ENCODE measurements at regions of chr17 and their contacts with region 1.

Region 1: GRCh38 chr17:50547035-50547735 is at the start of gene SPATA20:
- DNase-seq: peak; percentile 96
- H3K4me3 ChIP-seq: peak within 1 kb of the TSS; percentile 35 to 75 (median 50)
- H3K27ac ChIP-seq: peak within 1 kb of the TSS; percentile 49 to 89 (median 85)
- H3K4me1 ChIP-seq: peaks cover 16 to 37% (median 27%) of the 10 kb centered on the region in 6 donors
- H3K27me3 ChIP-seq: peaks cover 0 to 11% (median 0%) of the 10 kb centered on the region in 7 donors
- CTCF ChIP-seq: peak in 10 of 11 experiments; percentile 90 to 98 (median 98)
- POLR2A ChIP-seq: peak in 2 of 3 donors; percentile 22 to 45
- total RNA-seq, gene SPATA20: 32.8 to 128 (median 57.5) TPM

Region 2: DNA sequence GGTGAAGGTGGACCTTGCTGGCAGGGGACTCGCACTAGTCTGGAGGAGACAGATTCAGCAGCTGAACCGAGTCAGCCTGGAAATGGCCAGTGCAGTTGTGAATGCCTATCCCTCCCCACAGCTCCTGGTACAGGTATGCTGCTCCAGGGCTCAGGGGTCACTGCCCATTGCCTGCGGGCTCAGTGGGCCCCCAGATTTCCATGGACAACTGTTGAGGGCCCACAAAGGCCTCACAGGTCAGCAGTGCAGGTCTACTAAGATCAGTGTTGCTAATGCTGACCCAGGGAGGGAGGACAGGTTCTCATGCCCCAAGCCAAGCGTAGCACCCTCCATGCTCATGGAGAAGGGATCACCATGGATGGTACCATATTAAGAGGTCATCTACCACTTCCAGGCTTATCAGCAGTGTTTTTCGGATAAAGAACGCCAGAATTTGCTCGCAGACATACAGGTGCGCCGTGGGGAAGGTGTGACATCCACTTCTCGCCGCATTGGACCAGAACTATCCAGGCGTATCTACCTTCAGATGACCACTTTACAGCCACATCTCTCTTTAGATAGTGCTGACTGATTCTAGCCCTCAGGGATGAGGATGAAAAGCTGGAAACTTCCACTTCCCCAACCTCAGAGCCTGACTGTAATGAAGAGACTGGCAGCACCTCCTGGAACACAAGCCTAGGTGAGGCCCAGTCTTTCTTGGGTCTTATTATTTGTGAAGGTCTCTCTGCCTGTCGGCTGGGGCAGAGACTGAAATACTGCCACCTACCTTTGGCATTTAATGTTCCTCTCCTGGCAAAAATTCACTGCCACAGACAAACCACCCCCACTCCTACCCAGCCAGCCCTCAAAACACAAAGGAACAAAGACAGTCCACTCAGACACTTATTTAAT is 166.6 kb before region 1 on chr17:
- intact Hi-C with region 1: no loop called
- DNase-seq: peak; percentile 54
- H3K4me3 ChIP-seq: no peak overlapping the region
- H3K27ac ChIP-seq: no peak overlapping the region
- H3K4me1 ChIP-seq: no peaks in the 10 kb centered on the region
- H3K27me3 ChIP-seq: no peaks in the 10 kb centered on the region
- CTCF ChIP-seq: peak in 1 of 11 experiments; percentile 1
- POLR2A ChIP-seq: no peak

Region 3: GRCh38 chr17:50498021-50498874 is 48.9 kb before region 1 on chr17:
- intact Hi-C with region 1: no loop called
- DNase-seq: no peak
- H3K4me3 ChIP-seq: no peak overlapping the region
- H3K27ac ChIP-seq: no peak overlapping the region
- H3K4me1 ChIP-seq: no peaks in the 10 kb centered on the region
- H3K27me3 ChIP-seq: no peaks in the 10 kb centered on the region
- CTCF ChIP-seq: no peak
- POLR2A ChIP-seq: no peak

Region 4: DNA sequence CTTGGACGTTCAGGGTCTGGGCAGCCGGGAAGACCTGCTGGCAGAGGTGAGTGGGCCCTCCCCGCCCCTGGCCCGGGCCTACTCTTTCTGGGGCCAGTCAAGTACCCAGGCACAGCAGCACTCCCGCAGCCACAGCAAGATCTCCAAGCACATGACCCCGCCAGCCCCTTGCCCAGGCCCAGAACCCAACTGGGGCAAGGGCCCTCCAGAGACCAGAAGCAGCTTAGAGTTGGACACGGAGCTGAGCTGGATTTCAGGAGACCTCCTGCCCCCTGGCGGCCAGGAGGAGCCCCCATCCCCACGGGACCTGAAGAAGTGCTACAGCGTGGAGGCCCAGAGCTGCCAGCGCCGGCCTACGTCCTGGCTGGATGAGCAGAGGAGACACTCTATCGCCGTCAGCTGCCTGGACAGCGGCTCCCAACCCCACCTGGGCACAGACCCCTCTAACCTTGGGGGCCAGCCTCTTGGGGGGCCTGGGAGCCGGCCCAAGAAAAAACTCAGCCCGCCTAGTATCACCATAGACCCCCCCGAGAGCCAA is 78.9 kb after region 1 on chr17:
- intact Hi-C with region 1: loop called (anchors 10 kb)
- DNase-seq: peak; percentile 86
- H3K4me3 ChIP-seq: no peak overlapping the region
- H3K27ac ChIP-seq: no peak overlapping the region
- H3K4me1 ChIP-seq: peaks cover 0 to 25% (median 11%) of the 10 kb centered on the region in 6 donors
- H3K27me3 ChIP-seq: peaks cover 0 to 88% (median 29%) of the 10 kb centered on the region in 7 donors
- CTCF ChIP-seq: peak; percentile 44 to 82 (median 73)
- POLR2A ChIP-seq: no peak

Region 5: GRCh38 chr17:50697663-50698274 is 150.6 kb after region 1 on chr17:
- intact Hi-C with region 1: loop called (anchors 5 kb)
- DNase-seq: no peak
- H3K4me3 ChIP-seq: no peak overlapping the region
- H3K27ac ChIP-seq: peak overlapping the region in 1 of 8 donors; percentile 33
- H3K4me1 ChIP-seq: peaks cover 0 to 37% (median 1%) of the 10 kb centered on the region in 6 donors
- H3K27me3 ChIP-seq: no peaks in the 10 kb centered on the region
- CTCF ChIP-seq: no peak
- POLR2A ChIP-seq: no peak

Region 6: DNA sequence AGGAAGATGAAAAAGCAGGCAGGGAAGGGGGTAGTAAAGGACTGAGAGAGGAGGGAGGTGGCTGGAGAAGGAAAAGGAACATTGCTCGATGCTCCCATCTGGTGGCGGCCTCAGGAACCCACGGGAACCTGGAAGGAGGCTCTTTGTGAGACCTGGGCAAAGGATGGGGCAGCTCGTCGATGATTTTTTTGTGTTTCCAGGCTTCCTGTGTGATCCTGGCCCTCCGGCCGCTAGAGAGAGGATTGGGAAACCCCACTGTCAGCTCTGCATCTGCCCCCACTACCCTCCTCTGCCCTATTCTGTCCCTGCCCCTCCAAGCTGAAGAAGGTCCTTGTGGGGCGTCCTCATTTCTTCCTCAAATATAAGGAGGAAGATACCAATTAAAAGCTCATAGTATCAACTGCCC is 294.8 kb after region 1 on chr17:
- intact Hi-C with region 1: loop called (anchors 10 kb)
- DNase-seq: no peak
- H3K4me3 ChIP-seq: no peak overlapping the region
- H3K27ac ChIP-seq: no peak overlapping the region
- H3K4me1 ChIP-seq: peaks cover 0 to 6% (median 0%) of the 10 kb centered on the region in 6 donors
- H3K27me3 ChIP-seq: no peaks in the 10 kb centered on the region
- CTCF ChIP-seq: peak; percentile 57 to 88 (median 80)
- POLR2A ChIP-seq: no peak

Measured in spleen (tissue), 13 donors.